Gastrocnemius medialis (tissue), 4 donors: ENCODE measurements at regions of chr21 and their contacts with region 1.

Region 1: GRCh38 chr21:46228345-46229051 is at the start of gene LSS:
- DNase-seq: peak; percentile 97 to 98
- ATAC-seq: peak; percentile 66 to 76
- H3K4me3 ChIP-seq: peak within 1 kb of the TSS; percentile 65 to 98 (median 83)
- H3K27ac ChIP-seq: peak within 1 kb of the TSS; percentile 83 to 99 (median 90)
- H3K4me1 ChIP-seq: peaks cover 24 to 35% of the 10 kb centered on the region in 2 donors
- H3K27me3 ChIP-seq: no peaks in the 10 kb centered on the region
- CTCF ChIP-seq: no peak
- POLR2A ChIP-seq: peak; percentile 96 to 98
- total RNA-seq, gene LSS: 26.4 to 47.2 (median 32.7) TPM

Region 2: DNA sequence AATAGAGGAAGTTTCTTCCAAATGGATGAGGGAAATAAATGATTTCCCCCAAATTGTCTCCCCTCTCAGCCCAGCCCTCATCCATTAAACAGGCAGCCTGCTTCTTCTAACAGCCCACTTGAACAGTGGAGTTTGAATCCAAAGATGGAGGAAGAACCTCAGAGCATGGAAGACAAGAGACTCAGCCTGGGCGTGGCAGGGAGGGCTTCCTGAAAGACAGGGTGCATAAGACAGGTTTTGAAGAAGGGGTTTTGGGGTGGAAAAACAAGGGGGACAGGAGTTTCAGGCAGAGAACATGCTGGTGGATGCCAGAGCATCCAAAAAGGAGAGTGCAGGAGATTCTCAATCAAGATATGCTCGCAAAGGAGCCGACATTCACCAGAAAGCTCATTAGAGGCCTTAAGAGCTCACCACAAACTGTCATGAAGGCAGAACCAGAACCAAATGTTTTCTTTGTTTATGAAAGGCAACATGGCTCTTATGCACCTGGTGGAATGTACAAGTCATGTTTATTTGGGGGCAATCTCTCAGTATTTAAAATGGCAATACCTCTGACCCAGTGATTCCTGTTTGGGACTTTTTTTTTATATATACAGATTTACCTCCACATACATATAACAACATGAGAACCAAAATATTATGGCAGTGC is 1490.7 kb before region 1 on chr21:
- in situ Hi-C with region 1: no loop called
- intact Hi-C with region 1: no loop called
- DNase-seq: no peak
- ATAC-seq: no peak
- H3K4me3 ChIP-seq: no peak overlapping the region
- H3K27ac ChIP-seq: no peak overlapping the region
- H3K4me1 ChIP-seq: no peaks in the 10 kb centered on the region
- H3K27me3 ChIP-seq: peaks cover 3 to 4% (median 4%) of the 10 kb centered on the region in 3 donors
- CTCF ChIP-seq: no peak
- POLR2A ChIP-seq: no peak

Region 3: GRCh38 chr21:45973659-45974072 is 254.8 kb before region 1 on chr21:
- in situ Hi-C with region 1: no loop called
- intact Hi-C with region 1: loop called (anchors 5 kb)
- DNase-seq: no peak
- ATAC-seq: peak; percentile 29 to 43
- H3K4me3 ChIP-seq: peak overlapping the region; percentile 64 to 88 (median 64)
- H3K27ac ChIP-seq: peak overlapping the region; percentile 81 to 89 (median 84)
- H3K4me1 ChIP-seq: peaks cover 27 to 31% of the 10 kb centered on the region in 2 donors
- H3K27me3 ChIP-seq: peaks cover 21 to 30% (median 23%) of the 10 kb centered on the region in 3 donors
- CTCF ChIP-seq: peak; percentile 39 to 73 (median 53)
- POLR2A ChIP-seq: peak; percentile 7 to 28

Region 4: GRCh38 chr21:46184625-46185555 is 43.6 kb before region 1 on chr21:
- in situ Hi-C with region 1: no loop called
- intact Hi-C with region 1: loop called (anchors 2 kb)
- DNase-seq: peak; percentile 48 to 87
- ATAC-seq: peak; percentile 27 to 76
- H3K4me3 ChIP-seq: peak overlapping the region; percentile 49 to 66 (median 56)
- H3K27ac ChIP-seq: peak overlapping the region; percentile 73 to 94 (median 86)
- H3K4me1 ChIP-seq: peaks cover 23 to 33% of the 10 kb centered on the region in 2 donors
- H3K27me3 ChIP-seq: no peaks in the 10 kb centered on the region
- CTCF ChIP-seq: no peak
- POLR2A ChIP-seq: peak; percentile 10 to 62

Region 5: DNA sequence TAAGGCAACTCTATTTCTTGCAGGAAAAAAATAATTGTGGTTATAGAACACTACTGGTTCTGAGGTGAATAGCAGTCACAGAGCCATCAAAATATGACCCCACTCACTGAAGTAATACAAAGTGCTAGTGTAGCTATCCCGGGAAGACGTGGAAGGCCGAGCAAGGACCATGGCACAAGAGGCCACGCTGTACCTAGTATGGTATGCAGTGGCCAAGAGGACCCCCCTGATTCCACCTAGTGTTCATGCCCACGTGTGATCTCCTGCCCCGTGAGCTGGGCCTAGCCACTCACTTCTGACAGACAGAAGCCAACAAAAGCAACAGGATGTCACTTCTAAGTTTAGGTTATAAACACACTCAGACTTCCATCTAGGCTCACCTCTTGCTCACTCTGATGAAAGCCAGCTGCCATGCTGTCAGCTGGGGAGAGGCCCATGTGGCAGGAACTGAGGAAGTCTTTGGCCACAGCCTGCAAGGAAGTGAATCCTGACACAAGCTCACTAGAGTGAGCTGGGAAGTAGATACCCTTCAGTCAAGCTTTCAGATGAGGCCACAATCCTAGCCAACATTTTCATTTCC is 21.7 kb after region 1 on chr21:
- in situ Hi-C with region 1: no loop called
- intact Hi-C with region 1: loop called (anchors 2 kb)
- DNase-seq: peak in 1 of 2 donors; percentile 65
- ATAC-seq: peak; percentile 51 to 70
- H3K4me3 ChIP-seq: no peak overlapping the region
- H3K27ac ChIP-seq: peak overlapping the region; percentile 64 to 83 (median 70)
- H3K4me1 ChIP-seq: peaks cover 9 to 17% of the 10 kb centered on the region in 2 donors
- H3K27me3 ChIP-seq: no peaks in the 10 kb centered on the region
- CTCF ChIP-seq: no peak
- POLR2A ChIP-seq: no peak

Region 6: DNA sequence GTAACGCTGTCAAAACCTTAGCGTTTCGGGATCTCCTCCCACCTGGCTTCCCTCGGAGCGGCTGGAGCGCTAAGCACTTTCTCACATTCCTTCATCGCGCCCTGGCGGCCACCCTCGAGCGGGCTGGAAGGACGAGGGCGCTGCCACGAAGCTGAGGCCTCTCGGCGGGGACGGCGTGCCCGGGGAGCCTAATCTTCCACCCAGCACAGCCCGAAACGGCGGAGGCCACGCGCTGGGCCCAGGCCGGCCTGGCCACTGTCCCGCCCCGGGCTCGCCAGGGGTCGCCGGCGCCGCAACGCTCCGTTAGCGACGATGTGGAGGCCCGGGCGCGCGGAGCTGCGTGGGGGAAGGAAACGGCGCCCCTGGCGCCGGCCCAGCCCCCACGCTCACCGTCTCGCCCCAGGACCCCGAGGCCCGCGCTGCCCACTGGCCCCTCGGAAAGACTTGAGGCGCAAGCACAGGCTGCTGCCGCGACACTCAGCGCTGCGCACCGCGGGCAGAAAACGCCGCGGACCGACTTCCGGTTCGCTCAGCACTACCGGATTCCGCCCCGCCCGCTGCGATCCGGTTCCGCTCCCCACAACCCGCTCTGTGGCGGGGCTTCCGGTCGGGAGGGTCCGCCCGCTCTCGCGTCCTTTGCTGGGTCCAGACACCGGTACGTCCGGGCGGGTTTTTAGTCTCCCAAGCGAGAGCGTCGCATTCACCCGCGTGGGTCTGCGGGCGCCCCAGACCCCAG is 57.4 kb after region 1 on chr21 and contains the start of gene YBEY:
- in situ Hi-C with region 1: loop called in 1 of 4 experiments (anchors 5 kb)
- intact Hi-C with region 1: loop called (anchors 1 kb)
- DNase-seq: peak; percentile 81 to 85
- ATAC-seq: peak; percentile 97
- H3K4me3 ChIP-seq: peak within 1 kb of the TSS; percentile 75 to 93 (median 88)
- H3K27ac ChIP-seq: peak within 1 kb of the TSS; percentile 85 to 98 (median 92)
- H3K4me1 ChIP-seq: peaks cover 42 to 45% of the 10 kb centered on the region in 2 donors
- H3K27me3 ChIP-seq: no peaks in the 10 kb centered on the region
- CTCF ChIP-seq: peak; percentile 17 to 55 (median 49)
- POLR2A ChIP-seq: peak; percentile 67 to 83
- total RNA-seq, gene YBEY: 11.3 to 27.9 (median 18.7) TPM

Region 7: DNA sequence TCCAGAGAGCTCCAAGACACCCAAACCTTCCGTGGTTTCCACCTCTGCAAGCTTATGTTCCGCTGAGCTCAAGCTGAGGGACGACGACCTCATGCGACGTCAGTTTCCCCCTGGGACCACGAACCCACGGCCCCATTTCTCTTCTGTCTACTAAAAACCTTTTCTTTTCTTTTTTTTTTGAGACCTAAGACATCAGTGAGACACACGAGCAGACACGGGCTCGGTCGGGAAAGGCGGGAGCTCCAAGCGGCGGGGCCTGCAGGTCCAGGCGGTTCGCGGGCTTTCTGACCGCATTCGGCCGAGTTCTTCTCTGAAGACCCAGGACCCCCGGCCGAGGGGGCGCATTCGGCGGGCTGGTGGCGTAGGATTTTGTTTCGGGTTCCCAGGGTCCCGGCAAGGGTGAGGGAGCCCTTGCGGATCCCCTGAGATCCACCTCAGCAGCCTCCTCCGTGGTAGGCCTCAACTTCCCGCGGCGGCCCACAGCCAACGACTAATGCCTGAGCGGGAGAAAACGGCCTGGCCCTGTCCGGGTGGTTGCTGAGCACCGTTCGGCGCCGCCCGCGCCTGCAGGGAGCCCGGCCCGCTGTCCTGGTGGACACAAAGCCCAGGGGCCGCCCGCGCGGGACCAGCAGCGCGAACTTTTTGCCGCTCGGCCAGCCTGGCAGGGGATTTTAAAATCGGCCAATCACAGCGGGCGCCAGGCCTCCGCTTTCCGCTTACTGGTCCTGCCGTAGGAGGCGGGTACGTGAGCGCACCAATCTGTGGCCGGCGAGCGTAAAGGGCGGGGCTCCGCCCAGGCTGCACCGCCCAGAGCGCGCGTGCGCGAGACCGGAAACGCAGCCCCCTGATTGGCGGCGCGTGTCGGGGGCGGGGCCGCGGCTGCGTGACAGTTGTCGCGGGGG is 95.0 kb after region 1 on chr21 and contains the start of gene C21orf58:
- in situ Hi-C with region 1: no loop called
- intact Hi-C with region 1: loop called (anchors 1 kb)
- DNase-seq: peak; percentile 97 to 98
- ATAC-seq: peak; percentile 84 to 87
- H3K4me3 ChIP-seq: peak within 1 kb of the TSS; percentile 87 to 93 (median 88)
- H3K27ac ChIP-seq: peak within 1 kb of the TSS; percentile 96 to 100 (median 98)
- H3K4me1 ChIP-seq: peaks cover 18 to 26% of the 10 kb centered on the region in 2 donors
- H3K27me3 ChIP-seq: no peaks in the 10 kb centered on the region
- CTCF ChIP-seq: no peak
- POLR2A ChIP-seq: no peak
- total RNA-seq, gene C21orf58: 0.44 to 1.6 (median 0.74) TPM